Thyroid gland (tissue), 4 donors: ENCODE measurements at regions of chr12 and their contacts with region 1.

Region 1: GRCh38 chr12:92987362-92987761 is 58.3 kb upstream of the EEA1 start:
- DNase-seq: peak in 1 of 2 donors; percentile 13
- H3K4me3 ChIP-seq: no peak overlapping the region
- H3K27ac ChIP-seq: no peak overlapping the region
- H3K4me1 ChIP-seq: peaks cover 0 to 6% of the 10 kb centered on the region in 2 donors
- H3K27me3 ChIP-seq: no peaks in the 10 kb centered on the region
- CTCF ChIP-seq: peak in 5 of 6 experiments; percentile 15 to 84 (median 59)
- POLR2A ChIP-seq: no peak

Region 2: GRCh38 chr12:92528097-92528496 is 459.3 kb before region 1 on chr12:
- intact Hi-C with region 1: no loop called
- DNase-seq: no peak
- H3K4me3 ChIP-seq: no peak overlapping the region
- H3K27ac ChIP-seq: no peak overlapping the region
- H3K4me1 ChIP-seq: no peaks in the 10 kb centered on the region
- H3K27me3 ChIP-seq: no peaks in the 10 kb centered on the region
- CTCF ChIP-seq: no peak
- POLR2A ChIP-seq: no peak

Region 3: DNA sequence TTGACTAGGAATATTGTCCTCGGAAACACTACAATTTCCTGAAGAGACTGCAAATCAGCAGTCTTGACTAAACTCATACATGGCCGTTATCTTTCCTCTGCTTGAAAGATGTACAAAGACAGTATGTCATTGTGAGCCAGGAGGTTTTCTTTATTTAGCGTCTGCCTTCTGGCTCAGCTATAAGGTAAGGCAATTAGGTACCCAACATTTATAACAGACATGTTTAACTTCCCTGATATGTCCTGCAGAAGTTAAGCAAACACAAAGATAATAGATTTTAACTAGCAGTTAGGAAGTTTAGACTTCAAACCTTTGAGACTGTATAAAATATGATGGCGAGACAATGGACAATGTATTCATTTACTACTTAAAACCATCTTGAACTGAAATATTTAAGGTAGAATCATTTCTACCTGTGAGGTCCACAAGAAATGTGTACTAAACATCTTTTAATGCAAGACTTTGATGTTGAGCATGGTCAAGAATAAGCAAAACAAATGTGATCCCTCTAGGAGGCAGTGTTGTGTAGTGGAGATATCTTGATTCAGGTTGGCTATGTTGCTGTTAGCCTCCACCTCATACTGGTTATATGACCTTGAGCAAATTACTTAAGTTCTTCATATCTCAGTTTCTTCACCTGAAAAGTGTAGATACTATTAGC is 37.9 kb after region 1 on chr12:
- intact Hi-C with region 1: no loop called
- DNase-seq: no peak
- H3K4me3 ChIP-seq: no peak overlapping the region
- H3K27ac ChIP-seq: no peak overlapping the region
- H3K4me1 ChIP-seq: no peaks in the 10 kb centered on the region
- H3K27me3 ChIP-seq: no peaks in the 10 kb centered on the region
- CTCF ChIP-seq: peak in 4 of 6 experiments; percentile 47 to 69 (median 60)
- POLR2A ChIP-seq: no peak

Region 4: DNA sequence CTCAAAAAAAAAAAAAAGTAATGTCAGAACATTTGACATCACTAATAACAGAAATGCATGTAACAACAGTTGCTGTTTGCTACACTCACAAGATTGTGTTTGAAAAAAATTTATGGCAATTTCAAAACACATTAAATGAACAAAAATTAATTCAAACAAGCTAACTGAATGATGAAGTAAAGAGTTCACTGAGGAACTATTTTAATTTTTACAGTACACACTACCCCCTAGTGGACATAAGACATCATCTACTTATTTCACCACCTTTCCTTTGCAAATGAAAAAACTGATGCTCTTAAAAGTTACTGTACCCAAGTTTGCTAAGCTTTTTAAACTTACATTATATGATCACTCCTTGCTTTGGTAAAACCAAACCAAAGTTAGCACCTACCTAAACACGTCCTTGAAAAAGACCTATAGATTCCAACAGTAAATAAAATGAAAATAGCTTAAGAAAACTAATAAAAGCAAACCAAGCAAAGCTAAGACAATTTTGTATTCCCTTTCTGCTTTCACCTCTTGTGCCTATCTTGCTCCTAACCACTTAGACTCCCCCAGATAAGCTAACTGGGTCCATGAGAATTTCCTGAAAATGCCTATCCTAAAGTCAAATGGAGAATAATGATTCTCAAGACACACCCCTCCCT is 432.1 kb after region 1 on chr12:
- intact Hi-C with region 1: loop called (anchors 5 kb)
- DNase-seq: no peak
- H3K4me3 ChIP-seq: no peak overlapping the region
- H3K27ac ChIP-seq: no peak overlapping the region
- H3K4me1 ChIP-seq: peaks cover 8 to 13% of the 10 kb centered on the region in 2 donors
- H3K27me3 ChIP-seq: no peaks in the 10 kb centered on the region
- CTCF ChIP-seq: peak in 5 of 6 experiments; percentile 12 to 70 (median 65)
- POLR2A ChIP-seq: no peak